ENCODE measurements at regions of chr17 and their contacts with region 1.

Region 1: GRCh38 chr17:50269477-50270434 is 4.5 kb upstream of the TMEM92 start:
- DNase-seq: peak in 1 of 2 experiments; percentile 86
- H3K4me3 ChIP-seq: 0 out of 8 replicates have a peak overlapping the region, but pooled peaks of 1 of the 4 experiments have one; percentile 5
- H3K27ac ChIP-seq: no peak overlapping the region
- H3K4me1 ChIP-seq: peaks cover 2 to 25% (median 21%) of the 10 kb centered on the region in 4 experiments
- H3K27me3 ChIP-seq: peaks cover 0 to 12% (median 5%) of the 10 kb centered on the region in 4 experiments; a peak in 4 of 7 replicates
- CTCF ChIP-seq: peak; percentile 76 to 96 (median 86)
- EP300 ChIP-seq: no peak
- POLR2A ChIP-seq: no peak
- RAD21 ChIP-seq: peak; percentile 80 to 87

Region 2: GRCh38 chr17:50252781-50253180 is 17.0 kb before region 1 on chr17:
- CTCF ChIA-PET with region 1: interaction called, 46 read pairs
- POLR2A ChIA-PET with region 1: interaction called, 3 read pairs
- DNase-seq: no peak
- H3K4me3 ChIP-seq: no peak overlapping the region
- H3K27ac ChIP-seq: no peak overlapping the region
- H3K4me1 ChIP-seq: peaks cover 0 to 8% (median 2%) of the 10 kb centered on the region in 4 experiments; a peak in 4 of 7 replicates
- H3K27me3 ChIP-seq: no peaks in the 10 kb centered on the region
- CTCF ChIP-seq: no peak
- EP300 ChIP-seq: no peak
- POLR2A ChIP-seq: no peak
- RAD21 ChIP-seq: no peak

Region 3: DNA sequence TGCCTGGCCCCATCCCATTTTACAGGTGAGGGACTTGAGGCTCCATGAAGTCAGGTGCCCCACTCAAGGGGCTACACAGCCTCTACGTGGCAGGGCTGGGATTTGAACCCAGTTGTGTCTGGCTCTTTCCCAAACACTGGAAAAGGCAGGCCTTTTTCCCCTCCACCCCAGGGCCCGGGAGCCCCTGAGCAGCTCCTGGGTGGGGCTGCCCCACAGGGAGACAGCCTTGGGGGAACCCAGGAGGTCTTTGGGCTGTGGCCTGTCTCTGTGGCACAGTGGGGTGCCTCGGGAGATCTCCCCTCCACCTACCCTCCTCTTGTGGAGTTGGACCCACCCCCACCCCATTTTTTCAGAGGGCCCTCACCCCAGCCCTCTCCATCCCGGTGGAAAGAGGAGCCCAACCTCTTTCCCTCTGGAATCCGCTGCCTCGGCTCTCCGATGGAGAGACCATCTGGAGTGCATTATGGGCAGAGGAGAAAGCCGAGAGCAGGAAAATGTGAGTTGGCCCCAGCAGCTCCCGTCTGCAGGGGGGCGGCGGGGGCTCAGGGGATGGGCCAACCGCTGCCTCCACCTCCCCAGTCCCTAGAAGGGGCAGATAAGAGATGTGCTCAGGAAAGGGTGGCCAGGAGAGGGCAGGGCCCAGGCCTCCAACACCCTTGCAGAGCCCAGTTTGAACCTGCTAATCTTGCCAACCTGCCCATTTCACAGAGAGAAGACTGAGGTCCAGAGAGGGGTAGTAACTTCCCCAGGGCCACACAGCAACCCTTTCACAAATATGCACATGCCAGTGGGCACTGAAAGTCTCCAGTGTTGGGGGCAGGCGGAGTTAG is 10.9 kb before region 1 on chr17:
- CTCF ChIA-PET with region 1: interaction called, 46 read pairs
- POLR2A ChIA-PET with region 1: interaction called, 3 read pairs
- DNase-seq: no peak
- H3K4me3 ChIP-seq: no peak overlapping the region
- H3K27ac ChIP-seq: no peak overlapping the region
- H3K4me1 ChIP-seq: peaks cover 0 to 18% (median 7%) of the 10 kb centered on the region in 4 experiments; a peak in 6 of 7 replicates
- H3K27me3 ChIP-seq: no peaks in the 10 kb centered on the region; a peak in 1 of 7 replicates
- CTCF ChIP-seq: peak in 1 of 3 experiments; percentile 1; a peak in 1 of 4 replicates
- EP300 ChIP-seq: no peak
- POLR2A ChIP-seq: no peak
- RAD21 ChIP-seq: no peak

Region 4: GRCh38 chr17:50283246-50283645 is 13.5 kb after region 1 on chr17:
- CTCF ChIA-PET with region 1: interaction called, 316 read pairs
- POLR2A ChIA-PET with region 1: interaction called, 7 read pairs
- DNase-seq: no peak
- H3K4me3 ChIP-seq: no peak overlapping the region
- H3K27ac ChIP-seq: no peak overlapping the region
- H3K4me1 ChIP-seq: peaks cover 3 to 17% (median 9%) of the 10 kb centered on the region in 4 experiments; a peak in 6 of 7 replicates
- H3K27me3 ChIP-seq: no peaks in the 10 kb centered on the region
- CTCF ChIP-seq: no peak
- EP300 ChIP-seq: no peak
- POLR2A ChIP-seq: no peak
- RAD21 ChIP-seq: no peak

Region 5: DNA sequence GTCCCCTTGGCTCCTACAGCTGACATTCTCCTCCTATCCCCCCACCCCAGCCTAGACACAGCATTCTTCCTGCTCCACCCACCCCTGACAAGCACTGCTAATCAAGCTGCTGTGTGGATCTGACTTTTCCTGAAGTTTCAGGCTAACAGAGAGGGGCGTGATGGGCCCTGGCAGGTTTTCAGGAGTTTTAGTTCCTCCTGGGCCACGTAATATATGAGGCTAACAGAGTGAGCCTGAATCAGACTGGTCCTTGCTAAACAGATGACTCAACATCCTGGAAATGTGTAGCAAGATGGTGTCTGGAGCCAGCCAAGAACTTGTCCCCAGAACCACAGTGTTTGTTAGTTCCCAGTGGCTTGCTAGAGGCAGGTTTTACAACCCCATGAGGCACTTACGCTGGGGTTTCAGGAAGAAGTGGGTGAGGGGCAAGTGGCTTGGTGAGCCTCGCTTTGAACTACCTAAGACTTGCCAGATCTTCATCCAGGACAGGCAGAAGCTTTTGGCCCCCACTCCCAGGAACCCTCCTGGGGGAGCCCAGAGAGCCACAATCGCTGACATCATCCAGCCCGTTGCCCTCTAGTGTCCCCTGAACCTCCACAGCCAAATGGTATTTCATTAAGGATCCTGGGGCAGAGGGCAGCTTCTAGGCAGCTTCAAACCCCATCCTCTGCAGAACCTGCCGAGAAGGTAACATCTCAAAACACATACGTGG is 20.4 kb after region 1 on chr17:
- CTCF ChIA-PET with region 1: interaction called, 316 read pairs
- POLR2A ChIA-PET with region 1: no interaction called
- DNase-seq: no peak
- H3K4me3 ChIP-seq: no peak overlapping the region
- H3K27ac ChIP-seq: no peak overlapping the region
- H3K4me1 ChIP-seq: peaks cover 0 to 1% (median 0%) of the 10 kb centered on the region in 4 experiments; a peak in 2 of 7 replicates
- H3K27me3 ChIP-seq: no peaks in the 10 kb centered on the region; a peak in 1 of 7 replicates
- CTCF ChIP-seq: no peak
- EP300 ChIP-seq: no peak
- POLR2A ChIP-seq: no peak
- RAD21 ChIP-seq: no peak

Region 6: DNA sequence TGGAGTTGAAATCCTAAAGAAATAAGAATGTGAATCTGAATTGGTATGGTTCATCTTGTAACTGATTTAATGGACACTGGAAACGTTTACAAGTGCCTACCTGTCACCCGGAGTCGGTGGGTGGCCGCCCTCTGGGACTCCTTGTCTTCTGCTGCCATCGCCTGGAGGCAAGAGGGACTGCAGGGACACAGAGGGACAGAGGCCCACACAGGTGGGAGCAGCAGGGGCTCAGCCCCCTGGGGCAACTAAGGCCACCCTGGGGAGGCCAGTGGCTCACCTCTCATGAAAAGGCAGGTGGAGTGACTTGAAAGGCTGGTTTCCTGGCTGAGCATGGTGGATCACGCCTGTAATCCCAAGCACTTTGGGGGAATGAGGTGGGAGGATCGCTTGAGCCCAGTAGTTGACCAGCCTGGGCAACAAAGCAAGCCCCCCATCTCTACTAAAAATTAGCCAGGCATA is 27.7 kb after region 1 on chr17:
- CTCF ChIA-PET with region 1: interaction called, 316 read pairs
- POLR2A ChIA-PET with region 1: no interaction called
- DNase-seq: peak; percentile 50 to 93
- H3K4me3 ChIP-seq: no peak overlapping the region
- H3K27ac ChIP-seq: no peak overlapping the region
- H3K4me1 ChIP-seq: peaks cover 0 to 4% (median under 1%) of the 10 kb centered on the region in 4 experiments; a peak in 2 of 7 replicates
- H3K27me3 ChIP-seq: no peaks in the 10 kb centered on the region
- CTCF ChIP-seq: peak; percentile 93 to 96 (median 94)
- EP300 ChIP-seq: no peak
- POLR2A ChIP-seq: no peak
- RAD21 ChIP-seq: peak; percentile 99 to 100

Measured in H1 (cell line).